Transverse colon (tissue), 4 donors: ENCODE measurements at regions of chr19 and their contacts with region 1.

Region 1: GRCh38 chr19:51593969-51594773 is 23.1 kb downstream of the ZNF175 start:
- DNase-seq: peak; percentile 99
- H3K4me3 ChIP-seq: peak overlapping the region; percentile 54 to 69 (median 66)
- H3K27ac ChIP-seq: peak overlapping the region; percentile 50 to 82 (median 72)
- H3K4me1 ChIP-seq: peaks cover 7 to 18% (median 12%) of the 10 kb centered on the region in 4 donors
- H3K27me3 ChIP-seq: no peaks in the 10 kb centered on the region
- CTCF ChIP-seq: no peak
- EP300 ChIP-seq: no peak
- POLR2A ChIP-seq: no peak

Region 2: DNA sequence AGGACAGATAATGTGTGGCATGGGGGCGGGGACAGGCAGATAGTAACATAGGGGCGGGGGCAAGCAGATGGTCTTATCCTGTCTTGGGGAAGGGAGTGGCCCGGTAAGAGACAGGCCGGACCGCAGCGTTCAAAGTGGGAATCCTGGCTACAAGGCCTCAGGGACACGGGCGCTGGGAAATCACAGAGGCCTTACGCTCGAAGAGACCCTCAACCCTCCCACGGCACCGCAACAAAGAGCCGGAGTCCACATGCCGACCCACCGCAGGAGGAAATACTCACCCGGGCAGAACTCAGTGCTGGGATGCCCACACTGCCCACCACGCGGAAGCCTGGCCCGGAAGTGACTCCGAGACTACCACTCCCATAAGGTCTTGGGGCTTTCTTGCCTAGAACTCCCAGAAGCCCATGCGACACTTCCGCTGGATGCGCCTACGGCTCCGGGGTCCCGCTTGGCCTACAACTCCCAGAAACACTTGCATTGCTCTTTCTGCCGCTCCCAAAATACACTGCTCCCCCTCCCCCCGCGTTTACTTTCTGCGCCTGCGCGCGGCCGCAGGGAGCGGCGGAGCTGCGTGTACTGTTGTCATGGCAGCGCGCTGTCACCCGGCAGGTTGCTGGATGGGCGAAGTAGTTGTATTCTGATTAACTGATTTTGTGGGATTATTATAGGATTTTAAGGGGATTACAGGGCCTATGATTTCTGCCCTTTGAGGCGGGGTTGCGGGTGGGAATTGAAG is 485.9 kb before region 1 on chr19 and contains the start of gene CTU1:
- in situ Hi-C with region 1: no loop called
- intact Hi-C with region 1: loop called (anchors 10 kb)
- DNase-seq: peak; percentile 99
- H3K4me3 ChIP-seq: peak within 1 kb of the TSS; percentile 53 to 88 (median 76)
- H3K27ac ChIP-seq: peak within 1 kb of the TSS; percentile 56 to 81 (median 73)
- H3K4me1 ChIP-seq: peaks cover 10 to 17% (median 16%) of the 10 kb centered on the region in 4 donors
- H3K27me3 ChIP-seq: peaks cover 6% of the 10 kb centered on the region
- CTCF ChIP-seq: peak in 2 of 5 experiments; percentile 45 to 55
- EP300 ChIP-seq: no peak
- POLR2A ChIP-seq: peak; percentile 53
- total RNA-seq, gene CTU1: 3.4 to 35.4 (median 7.3) TPM

Region 3: GRCh38 chr19:51375504-51376221 is 218.5 kb before region 1 on chr19:
- in situ Hi-C with region 1: no loop called
- intact Hi-C with region 1: no loop called
- DNase-seq: no peak
- H3K4me3 ChIP-seq: no peak overlapping the region
- H3K27ac ChIP-seq: no peak overlapping the region
- H3K4me1 ChIP-seq: no peaks in the 10 kb centered on the region
- H3K27me3 ChIP-seq: no peaks in the 10 kb centered on the region
- CTCF ChIP-seq: no peak
- EP300 ChIP-seq: no peak
- POLR2A ChIP-seq: no peak